ENCODE measurements at regions of chr3 and their contacts with region 1.

Region 1: GRCh38 chr3:49093853-49094767 is at the start of gene QRICH1:
- DNase-seq: peak; percentile 93 to 98 (median 96)
- ATAC-seq: peak; percentile 86
- H3K4me3 ChIP-seq: peak within 1 kb of the TSS; percentile 100
- H3K4me3 Mint-ChIP-seq: peak within 1 kb of the TSS; percentile 85 to 99 (median 96)
- H3K27ac ChIP-seq: peak within 1 kb of the TSS; percentile 87
- H3K27ac Mint-ChIP-seq: peak within 1 kb of the TSS; percentile 88 to 99 (median 97)
- H3K4me1 ChIP-seq: peaks cover 26 to 35% of the 10 kb centered on the region in 2 donors
- H3K4me1 Mint-ChIP-seq: peaks cover 25 to 49% (median 34%) of the 10 kb centered on the region in 7 donors
- H3K27me3 ChIP-seq: no peaks in the 10 kb centered on the region
- H3K27me3 Mint-ChIP-seq: no peaks in the 10 kb centered on the region
- total RNA-seq, gene QRICH1: 146 to 192 (median 184) TPM

Region 2: DNA sequence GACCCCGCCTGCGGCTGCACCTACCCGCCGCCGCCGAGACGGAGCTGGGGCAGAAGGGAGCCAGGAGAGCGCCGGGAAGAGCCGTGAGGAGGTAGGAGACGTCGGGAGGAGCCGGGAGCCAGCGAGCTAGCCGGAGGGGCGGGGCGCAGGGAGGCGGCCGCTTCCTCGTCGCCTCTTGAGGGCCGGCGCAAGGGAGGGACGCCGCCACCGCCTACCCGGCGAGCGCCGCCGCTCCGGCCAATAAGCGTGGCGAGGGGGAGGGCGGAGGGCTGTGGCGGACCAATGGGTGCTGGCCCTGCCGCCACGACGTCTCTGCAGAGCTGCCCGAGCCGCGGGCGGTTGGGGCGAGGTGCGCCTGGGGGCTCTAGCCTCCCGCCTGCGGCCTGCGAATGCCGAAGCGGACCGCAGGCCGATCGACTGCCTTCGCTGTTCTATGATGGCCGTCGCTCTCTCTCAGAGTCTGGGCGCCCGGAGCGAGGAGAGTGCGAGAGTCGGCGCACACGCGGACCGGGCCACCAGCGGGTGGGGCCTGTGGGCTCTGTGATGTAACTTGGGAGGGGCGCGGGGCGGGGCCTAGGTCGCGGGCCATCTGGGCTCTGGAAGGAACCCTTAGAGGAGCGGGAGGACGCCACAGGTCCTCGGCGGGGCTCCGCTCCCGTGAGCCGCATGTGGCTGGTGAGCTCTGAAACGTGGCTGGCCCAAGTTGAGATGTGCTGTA is 1005.2 kb before region 1 on chr3:
- CTCF ChIA-PET with region 1: interaction called, 3 read pairs
- POLR2A ChIA-PET with region 1: no interaction called
- intact Hi-C with region 1: loop called in 1 of 2 experiments (anchors 5 kb)
- DNase-seq: peak; percentile 89 to 96 (median 94)
- ATAC-seq: peak; percentile 97
- H3K4me3 ChIP-seq: peak overlapping the region; percentile 85
- H3K4me3 Mint-ChIP-seq: peak overlapping the region; percentile 90 to 99 (median 96)
- H3K27ac ChIP-seq: peak overlapping the region; percentile 95
- H3K27ac Mint-ChIP-seq: peak overlapping the region; percentile 71 to 99 (median 98)
- H3K4me1 ChIP-seq: peaks cover 7 to 11% of the 10 kb centered on the region in 2 donors
- H3K4me1 Mint-ChIP-seq: peaks cover 14 to 33% (median 29%) of the 10 kb centered on the region in 7 donors
- H3K27me3 ChIP-seq: no peaks in the 10 kb centered on the region
- H3K27me3 Mint-ChIP-seq: peaks cover 0 to 18% (median 0%) of the 10 kb centered on the region in 5 donors

Region 3: DNA sequence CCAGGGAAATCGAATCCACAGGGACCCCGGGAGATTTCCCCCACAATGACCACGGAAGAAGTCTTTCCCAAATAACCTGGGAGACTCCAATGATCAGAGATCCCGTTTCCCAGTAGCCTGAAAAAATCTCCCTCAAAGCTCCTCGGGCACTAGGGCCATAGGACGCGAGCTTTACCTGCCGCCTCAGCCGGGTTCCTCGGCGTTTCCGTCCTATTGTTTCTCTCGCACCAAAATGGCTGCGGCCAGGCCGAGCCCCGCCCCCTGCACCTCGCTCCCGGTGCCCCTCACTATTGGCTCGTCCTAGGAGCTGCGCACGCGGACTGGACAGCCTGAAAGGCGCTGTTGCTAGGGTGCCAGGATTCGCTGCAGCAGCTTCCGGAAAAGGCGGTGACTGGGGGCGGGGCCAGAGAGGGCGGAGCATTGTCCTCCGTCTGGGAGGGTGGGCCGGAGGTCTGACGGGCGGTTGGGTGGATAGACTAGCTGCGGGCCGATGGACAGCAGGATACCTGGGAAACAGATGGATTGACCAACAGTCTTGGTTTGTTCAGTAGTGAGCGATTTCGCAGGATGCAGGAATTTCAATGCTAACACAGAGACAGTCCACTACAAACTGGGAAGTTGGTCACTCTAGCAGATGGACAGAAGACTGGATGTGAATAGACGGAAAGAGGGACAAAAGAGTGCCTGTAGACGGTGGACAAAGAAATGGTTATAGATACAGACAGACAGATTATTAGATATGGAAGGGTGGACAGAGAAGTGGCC is 376.9 kb before region 1 on chr3 and contains the start of gene IP6K2:
- CTCF ChIA-PET with region 1: no interaction called
- POLR2A ChIA-PET with region 1: interaction called, 4 read pairs
- intact Hi-C with region 1: loop called (anchors 1 kb)
- DNase-seq: peak; percentile 92 to 99 (median 97)
- ATAC-seq: peak; percentile 100
- H3K4me3 ChIP-seq: peak within 1 kb of the TSS; percentile 99
- H3K4me3 Mint-ChIP-seq: peak within 1 kb of the TSS; percentile 94 to 99 (median 98)
- H3K27ac ChIP-seq: peak within 1 kb of the TSS; percentile 84
- H3K27ac Mint-ChIP-seq: peak within 1 kb of the TSS; percentile 83 to 99 (median 96)
- H3K4me1 ChIP-seq: peaks cover 23 to 29% of the 10 kb centered on the region in 2 donors
- H3K4me1 Mint-ChIP-seq: peaks cover 33 to 46% (median 39%) of the 10 kb centered on the region in 7 donors
- H3K27me3 ChIP-seq: no peaks in the 10 kb centered on the region
- H3K27me3 Mint-ChIP-seq: peaks cover 0 to 22% (median 0%) of the 10 kb centered on the region in 5 donors
- total RNA-seq, gene IP6K2: 72.0 to 94.3 (median 85.9) TPM

Region 4: GRCh38 chr3:49021813-49022687 is 72.1 kb before region 1 on chr3 and contains the start of gene NDUFAF3:
- CTCF ChIA-PET with region 1: interaction called, 3 read pairs
- POLR2A ChIA-PET with region 1: interaction called, 50 read pairs
- intact Hi-C with region 1: loop called (anchors 1 kb)
- DNase-seq: peak; percentile 84 to 96 (median 89)
- ATAC-seq: peak; percentile 89
- H3K4me3 ChIP-seq: peak within 1 kb of the TSS; percentile 99
- H3K4me3 Mint-ChIP-seq: peak within 1 kb of the TSS; percentile 92 to 99 (median 97)
- H3K27ac ChIP-seq: peak within 1 kb of the TSS; percentile 98
- H3K27ac Mint-ChIP-seq: peak within 1 kb of the TSS; percentile 95 to 99 (median 98)
- H3K4me1 ChIP-seq: peaks cover 24 to 25% of the 10 kb centered on the region in 2 donors
- H3K4me1 Mint-ChIP-seq: peaks cover 21 to 61% (median 47%) of the 10 kb centered on the region in 7 donors
- H3K27me3 ChIP-seq: no peaks in the 10 kb centered on the region
- H3K27me3 Mint-ChIP-seq: peaks cover 0 to 2% (median 0%) of the 10 kb centered on the region in 5 donors
- total RNA-seq, gene NDUFAF3: 63.8 to 110 (median 89.3) TPM

Region 5: DNA sequence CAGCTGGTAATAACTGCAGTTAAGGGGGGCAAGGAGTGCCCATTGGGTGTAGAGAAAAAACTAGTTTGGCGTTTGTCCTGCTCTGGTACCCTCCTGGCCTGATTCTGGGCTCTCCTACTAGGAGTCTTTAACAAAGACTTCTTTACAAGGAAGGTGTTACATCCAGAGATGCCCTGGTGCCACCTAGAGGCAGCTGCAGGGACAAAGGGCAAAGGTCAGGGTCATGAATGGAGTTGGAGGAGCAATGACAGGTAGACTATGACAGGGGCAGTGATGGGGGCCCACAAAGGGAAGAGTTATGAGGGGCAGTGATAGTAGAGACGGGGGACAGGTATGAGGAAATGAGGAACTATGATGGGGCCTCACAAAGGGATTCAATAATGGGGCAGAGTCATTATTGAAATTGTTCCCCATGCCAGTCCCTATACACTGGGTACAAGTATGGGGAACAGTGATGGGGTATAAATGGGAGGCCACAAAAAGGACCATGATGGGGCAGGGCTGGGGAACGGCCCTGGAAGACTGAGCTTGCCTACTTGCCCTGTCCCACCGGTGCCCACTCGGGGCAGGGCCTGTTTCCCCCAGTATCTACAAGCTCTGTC is 64.1 kb after region 1 on chr3:
- CTCF ChIA-PET with region 1: no interaction called
- POLR2A ChIA-PET with region 1: interaction called, 16 read pairs
- intact Hi-C with region 1: loop called in 1 of 2 experiments (anchors 1 kb)
- DNase-seq: peak in 8 of 9 donors; percentile 40 to 68 (median 59)
- ATAC-seq: peak; percentile 89
- H3K4me3 ChIP-seq: no peak overlapping the region
- H3K4me3 Mint-ChIP-seq: no peak overlapping the region
- H3K27ac ChIP-seq: peak overlapping the region; percentile 20
- H3K27ac Mint-ChIP-seq: peak overlapping the region in 6 of 9 donors; percentile 3 to 82 (median 18)
- H3K4me1 ChIP-seq: no peaks in the 10 kb centered on the region
- H3K4me1 Mint-ChIP-seq: peaks cover 0 to 10% (median 5%) of the 10 kb centered on the region in 7 donors
- H3K27me3 ChIP-seq: no peaks in the 10 kb centered on the region
- H3K27me3 Mint-ChIP-seq: no peaks in the 10 kb centered on the region

Region 6: GRCh38 chr3:49411968-49412631 is 318.0 kb after region 1 on chr3 and contains the starts of genes RHOA and TCTA:
- CTCF ChIA-PET with region 1: no interaction called
- POLR2A ChIA-PET with region 1: interaction called, 6 read pairs
- intact Hi-C with region 1: loop called (anchors 1 kb)
- DNase-seq: peak; percentile 94 to 100 (median 99)
- ATAC-seq: peak; percentile 90
- H3K4me3 ChIP-seq: peak within 1 kb of the TSS; percentile 86
- H3K4me3 Mint-ChIP-seq: peak within 1 kb of the TSS; percentile 82 to 97 (median 94)
- H3K27ac ChIP-seq: peak within 1 kb of the TSS; percentile 96
- H3K27ac Mint-ChIP-seq: peak within 1 kb of the TSS; percentile 88 to 97 (median 95)
- H3K4me1 ChIP-seq: peaks cover 61 to 65% of the 10 kb centered on the region in 2 donors
- H3K4me1 Mint-ChIP-seq: peaks cover 51 to 82% (median 71%) of the 10 kb centered on the region in 7 donors
- H3K27me3 ChIP-seq: no peaks in the 10 kb centered on the region
- H3K27me3 Mint-ChIP-seq: peaks cover 0 to 2% (median 0%) of the 10 kb centered on the region in 5 donors
- total RNA-seq, gene RHOA: 212 to 411 (median 218) TPM
- total RNA-seq, gene TCTA: 24.9 to 34.5 (median 28.5) TPM

Measured in naive thymus-derived CD4-positive, alpha-beta T cell (primary cell).